ENCODE measurements at regions of chr14 and their contacts with region 1.

Region 1: DNA sequence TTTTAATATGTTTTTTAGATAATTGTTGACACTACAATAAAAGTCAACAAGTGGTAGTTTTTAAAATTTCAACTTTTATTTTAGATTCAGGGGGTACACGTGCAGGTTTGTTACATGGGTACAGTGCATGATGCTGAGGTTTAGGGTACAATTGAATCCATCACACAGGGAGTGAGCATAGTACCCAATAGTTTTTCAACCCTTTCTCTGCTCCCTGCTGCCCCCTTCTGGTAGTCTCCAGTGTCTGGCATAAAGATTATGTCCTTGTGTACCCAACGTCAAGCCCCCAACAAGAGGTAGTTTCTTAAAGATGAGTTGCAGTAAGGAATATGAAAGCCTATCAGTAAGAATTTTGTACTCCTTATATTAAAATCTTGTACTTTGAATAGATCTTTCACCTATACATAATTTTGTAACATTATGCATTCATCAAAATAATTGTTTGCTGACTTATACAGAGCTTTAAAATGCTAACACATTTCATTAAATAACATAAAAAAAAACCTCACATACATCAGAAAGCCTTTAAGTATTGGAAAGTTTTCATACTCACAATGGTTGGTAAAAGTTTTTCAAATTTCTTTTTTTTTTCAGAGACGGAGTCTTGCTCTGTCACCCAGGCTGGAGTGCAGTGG is 5.4 kb upstream of the RALGAPA1 start:
- DNase-seq: peak in 4 of 10 donors; percentile 11 to 53 (median 38)
- H3K4me3 ChIP-seq: no peak overlapping the region
- H3K27ac ChIP-seq: no peak overlapping the region
- H3K27me3 ChIP-seq: no peaks in the 10 kb centered on the region
- CTCF ChIP-seq: peak; percentile 46 to 81 (median 68)

Region 2: GRCh38 chr14:35134328-35135123 is 680.0 kb before region 1 on chr14:
- intact Hi-C with region 1: loop called in 1 of 2 experiments (anchors 10 kb)
- DNase-seq: no peak
- H3K4me3 ChIP-seq: no peak overlapping the region
- H3K27ac ChIP-seq: peak overlapping the region in 49 of 59 donors; percentile 6 to 87 (median 66)
- H3K27me3 ChIP-seq: no peaks in the 10 kb centered on the region
- CTCF ChIP-seq: no peak

Region 3: DNA sequence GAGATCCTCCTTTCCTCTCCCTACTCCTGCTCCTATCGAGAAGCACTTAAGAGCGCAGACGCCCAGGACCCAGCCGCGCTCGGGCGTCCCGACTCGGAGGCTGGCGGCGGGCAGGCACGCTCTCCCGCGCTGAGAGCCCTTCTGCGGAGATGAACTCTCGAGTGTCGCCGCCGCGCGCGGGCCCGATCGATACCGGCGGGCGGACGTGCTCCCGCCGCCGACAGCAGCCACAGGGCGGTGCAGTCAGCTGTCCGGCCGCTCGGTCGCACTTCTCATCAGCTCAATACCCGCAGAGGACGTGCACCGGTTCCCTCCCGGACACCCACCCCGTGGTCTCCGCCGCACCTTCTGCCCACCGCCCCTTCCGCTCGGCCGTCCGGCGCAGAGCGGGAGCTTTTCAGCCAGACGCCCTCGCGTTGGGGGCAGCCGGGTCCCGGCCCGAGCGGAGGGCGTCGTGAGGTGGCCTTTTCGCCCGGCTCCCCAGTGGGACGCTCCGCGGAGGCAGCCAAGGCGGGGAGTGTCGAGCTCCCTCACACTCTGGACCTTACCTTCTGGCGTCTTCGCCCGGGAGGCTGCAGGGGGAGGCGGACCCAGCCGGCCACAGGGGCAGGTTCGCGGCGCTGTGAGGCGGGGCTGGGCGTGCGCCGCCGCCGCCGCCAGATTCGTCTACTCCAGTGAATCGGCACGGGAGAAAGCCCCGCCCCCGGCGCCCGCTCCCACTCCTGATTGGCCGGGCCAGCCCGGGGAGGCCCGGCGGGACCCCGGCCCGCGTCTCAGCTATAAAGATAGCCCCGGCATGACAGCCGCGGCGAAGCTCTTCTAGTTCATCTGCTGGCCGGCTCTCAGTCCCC is 280.9 kb before region 1 on chr14 and contains the start of gene INSM2:
- intact Hi-C with region 1: loop called in 1 of 2 experiments (anchors 10 kb)
- DNase-seq: peak; percentile 49 to 85 (median 77)
- H3K4me3 ChIP-seq: peak within 1 kb of the TSS; percentile 50 to 84 (median 71)
- H3K27ac ChIP-seq: peak within 1 kb of the TSS in 14 of 59 donors; percentile 1 to 59 (median 22)
- H3K27me3 ChIP-seq: peaks cover 0 to 31% (median 4%) of the 10 kb centered on the region in 45 donors
- CTCF ChIP-seq: peak in 12 of 56 donors; percentile 5 to 29 (median 13)
- total RNA-seq, gene INSM2: 0.74 to 5.8 (median 2.5) TPM

Region 4: DNA sequence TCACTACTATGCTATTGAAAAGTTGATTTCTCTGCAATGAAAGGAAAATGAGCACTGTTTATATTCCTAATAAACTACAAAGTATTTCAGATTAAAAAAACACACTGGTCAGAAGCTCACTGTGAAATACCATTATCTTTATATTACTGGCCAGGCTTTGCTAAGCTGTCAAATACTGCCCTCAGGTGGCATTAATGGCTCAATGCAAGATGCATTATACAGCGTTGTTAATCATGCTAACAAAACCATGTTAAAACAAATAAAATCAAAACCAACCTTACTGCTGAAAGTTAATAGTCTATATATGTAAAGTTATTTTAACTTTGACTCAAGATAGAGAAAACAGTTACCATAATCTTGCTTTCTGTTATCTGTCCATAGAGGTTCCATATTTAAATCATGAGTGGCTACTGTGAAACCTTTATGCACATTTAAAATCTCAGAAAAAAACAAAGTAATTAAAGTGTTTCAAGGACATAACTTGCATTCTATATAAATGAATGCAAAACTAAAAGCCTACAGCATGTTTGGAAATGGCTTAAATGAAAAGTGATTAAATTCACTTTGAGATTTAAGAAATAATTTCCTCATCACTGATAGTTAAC is 127.1 kb before region 1 on chr14:
- intact Hi-C with region 1: loop called in 1 of 2 experiments (anchors 2 kb)
- DNase-seq: peak in 2 of 10 donors; percentile 15 to 43
- H3K4me3 ChIP-seq: no peak overlapping the region
- H3K27ac ChIP-seq: no peak overlapping the region
- H3K27me3 ChIP-seq: no peaks in the 10 kb centered on the region
- CTCF ChIP-seq: peak; percentile 41 to 84 (median 72)

Region 5: DNA sequence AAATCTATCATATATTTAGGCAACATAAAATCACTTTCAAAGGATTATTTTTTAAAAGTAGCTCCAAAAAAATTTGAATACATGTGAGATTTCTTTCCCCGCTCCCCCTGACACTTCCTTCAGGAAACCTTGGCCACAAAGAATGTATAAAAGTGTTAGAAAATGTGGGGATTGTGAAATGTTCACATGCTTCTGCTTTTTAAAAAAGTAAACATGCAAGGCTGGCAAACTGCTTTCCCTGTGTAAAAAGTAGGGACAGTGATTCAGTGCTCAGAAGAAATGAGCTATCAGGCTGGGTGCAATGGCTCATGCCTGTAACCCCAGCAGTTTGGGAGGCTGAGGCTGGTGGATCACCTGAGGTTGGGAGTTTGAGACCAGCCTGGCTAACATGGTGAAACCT is 479.3 kb after region 1 on chr14:
- intact Hi-C with region 1: no loop called
- DNase-seq: no peak
- H3K4me3 ChIP-seq: no peak overlapping the region
- H3K27ac ChIP-seq: no peak overlapping the region
- H3K27me3 ChIP-seq: no peaks in the 10 kb centered on the region
- CTCF ChIP-seq: no peak

Measured in dorsolateral prefrontal cortex (tissue), 120 donors.